MCF 10A (cell line): ENCODE measurements at regions of chr5 and their contacts with region 1.

Region 1: GRCh38 chr5:151771259-151772028 is at the start of gene G3BP1:
- DNase-seq: peak; percentile 100
- H3K4me3 Mint-ChIP-seq: no peak within 1 kb of the TSS
- H3K27ac Mint-ChIP-seq: no peak within 1 kb of the TSS
- H3K4me1 Mint-ChIP-seq: peaks cover 13% of the 10 kb centered on the region
- H3K27me3 Mint-ChIP-seq: no peaks in the 10 kb centered on the region
- CTCF ChIP-seq: peak; percentile 67
- total RNA-seq, gene G3BP1: 279 and 282 TPM in 2 replicates

Region 2: GRCh38 chr5:151447174-151448037 is 324.0 kb before region 1 on chr5 and contains the start of gene SLC36A1:
- CTCF ChIA-PET with region 1: interaction called, 5 read pairs
- POLR2A ChIA-PET with region 1: interaction called, 11 read pairs
- intact Hi-C with region 1: loop called (anchors 1 kb)
- DNase-seq: peak; percentile 97
- H3K4me3 Mint-ChIP-seq: peak within 1 kb of the TSS; percentile 77
- H3K27ac Mint-ChIP-seq: peak within 1 kb of the TSS; percentile 66
- H3K4me1 Mint-ChIP-seq: peaks cover 19% of the 10 kb centered on the region
- H3K27me3 Mint-ChIP-seq: peaks cover 28% of the 10 kb centered on the region
- CTCF ChIP-seq: peak; percentile 97
- total RNA-seq, gene SLC36A1: 10.4 and 16.2 TPM in 2 replicates

Region 3: GRCh38 chr5:151569132-151570046 is 202.1 kb before region 1 on chr5:
- CTCF ChIA-PET with region 1: interaction called, 9 read pairs
- POLR2A ChIA-PET with region 1: interaction called, 12 read pairs
- intact Hi-C with region 1: no loop called
- DNase-seq: peak; percentile 42
- H3K4me3 Mint-ChIP-seq: no peak overlapping the region
- H3K27ac Mint-ChIP-seq: peak overlapping the region; percentile 57
- H3K4me1 Mint-ChIP-seq: peaks cover 54% of the 10 kb centered on the region
- H3K27me3 Mint-ChIP-seq: no peaks in the 10 kb centered on the region
- CTCF ChIP-seq: no peak

Region 4: DNA sequence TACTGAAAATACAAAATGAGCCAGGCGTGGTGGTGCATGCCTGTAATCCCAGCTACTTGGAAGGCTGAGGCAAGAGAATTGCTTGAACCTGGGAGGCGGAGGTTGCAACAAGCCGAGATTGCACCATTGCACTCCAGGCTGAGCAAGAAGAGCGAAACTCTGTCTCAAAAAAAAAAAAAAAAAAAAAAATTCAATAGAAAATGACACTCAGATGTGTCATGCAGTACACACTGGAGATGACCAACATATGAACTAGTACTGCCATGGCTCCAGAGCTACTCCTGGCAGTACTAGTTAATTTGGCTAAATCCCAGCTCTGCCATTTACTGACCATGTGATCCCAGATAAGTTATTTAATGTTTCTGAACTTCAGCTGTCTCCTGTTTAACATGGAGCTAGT is 20.4 kb before region 1 on chr5:
- CTCF ChIA-PET with region 1: interaction called, 7 read pairs
- POLR2A ChIA-PET with region 1: interaction called, 162 read pairs
- intact Hi-C with region 1: no loop called
- DNase-seq: peak; percentile 78
- H3K4me3 Mint-ChIP-seq: no peak overlapping the region
- H3K27ac Mint-ChIP-seq: peak overlapping the region; percentile 61
- H3K4me1 Mint-ChIP-seq: peaks cover 8% of the 10 kb centered on the region
- H3K27me3 Mint-ChIP-seq: no peaks in the 10 kb centered on the region
- CTCF ChIP-seq: no peak

Region 5: DNA sequence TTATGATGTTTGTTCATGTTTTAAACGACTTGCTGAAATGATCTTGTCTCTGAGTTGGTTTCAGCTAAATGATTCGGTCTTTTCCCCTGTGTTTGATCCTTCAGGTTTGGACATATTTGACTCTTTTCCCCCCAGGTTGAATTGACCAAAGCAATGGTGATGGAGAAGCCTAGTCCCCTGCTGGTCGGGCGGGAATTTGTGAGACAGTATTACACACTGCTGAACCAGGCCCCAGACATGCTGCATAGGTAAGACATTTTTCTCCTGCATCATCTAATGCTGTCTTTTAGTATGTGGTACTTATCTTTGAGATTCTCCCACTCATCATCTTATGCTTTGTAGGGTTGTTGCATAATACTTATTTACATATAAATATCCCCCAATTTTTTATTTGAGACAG is 15.0 kb after region 1 on chr5:
- CTCF ChIA-PET with region 1: interaction called, 4 read pairs
- POLR2A ChIA-PET with region 1: interaction called, 77 read pairs
- intact Hi-C with region 1: no loop called
- DNase-seq: no peak
- H3K4me3 Mint-ChIP-seq: no peak overlapping the region
- H3K27ac Mint-ChIP-seq: no peak overlapping the region
- H3K4me1 Mint-ChIP-seq: peaks cover 26% of the 10 kb centered on the region
- H3K27me3 Mint-ChIP-seq: no peaks in the 10 kb centered on the region
- CTCF ChIP-seq: no peak

Region 6: GRCh38 chr5:151811593-151812321 is 40.3 kb after region 1 on chr5:
- CTCF ChIA-PET with region 1: interaction called, 5 read pairs
- POLR2A ChIA-PET with region 1: interaction called, 24 read pairs
- intact Hi-C with region 1: no loop called
- DNase-seq: peak; percentile 57
- H3K4me3 Mint-ChIP-seq: no peak overlapping the region
- H3K27ac Mint-ChIP-seq: peak overlapping the region; percentile 58
- H3K4me1 Mint-ChIP-seq: peaks cover 44% of the 10 kb centered on the region
- H3K27me3 Mint-ChIP-seq: no peaks in the 10 kb centered on the region
- CTCF ChIP-seq: no peak

Region 7: DNA sequence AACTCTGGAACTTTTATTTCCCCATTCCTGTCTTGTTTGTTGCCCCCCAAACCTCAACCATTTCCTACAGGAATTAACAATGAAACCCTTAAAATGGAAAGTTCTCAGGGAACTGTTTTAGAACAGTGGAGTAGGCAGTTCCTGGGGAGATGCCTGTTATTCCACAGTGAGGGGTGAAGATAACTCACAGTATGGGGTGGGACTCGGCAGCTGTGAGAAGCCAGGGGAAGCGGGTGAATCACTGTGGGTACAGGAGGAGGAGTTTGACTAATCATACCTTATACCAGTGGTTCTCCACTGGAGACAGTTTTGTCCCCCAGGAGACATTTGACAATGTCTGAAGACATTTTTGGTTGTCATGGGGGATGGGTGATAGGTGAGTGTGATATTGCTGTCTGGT is 190.1 kb after region 1 on chr5:
- CTCF ChIA-PET with region 1: no interaction called
- POLR2A ChIA-PET with region 1: no interaction called
- intact Hi-C with region 1: no loop called
- DNase-seq: no peak
- H3K4me3 Mint-ChIP-seq: no peak overlapping the region
- H3K27ac Mint-ChIP-seq: no peak overlapping the region
- H3K4me1 Mint-ChIP-seq: no peaks in the 10 kb centered on the region
- H3K27me3 Mint-ChIP-seq: peaks cover 14% of the 10 kb centered on the region
- CTCF ChIP-seq: no peak